Activated CD4-positive, alpha-beta T cell treated with anti-CD3 and anti-CD28 coated beads, Interleukin-2, amount 10 ng/mL, durations not matched to agents 24 days and 14 days (primary cell): ENCODE measurements at regions of chr10 and their contacts with region 1.

Region 1: DNA sequence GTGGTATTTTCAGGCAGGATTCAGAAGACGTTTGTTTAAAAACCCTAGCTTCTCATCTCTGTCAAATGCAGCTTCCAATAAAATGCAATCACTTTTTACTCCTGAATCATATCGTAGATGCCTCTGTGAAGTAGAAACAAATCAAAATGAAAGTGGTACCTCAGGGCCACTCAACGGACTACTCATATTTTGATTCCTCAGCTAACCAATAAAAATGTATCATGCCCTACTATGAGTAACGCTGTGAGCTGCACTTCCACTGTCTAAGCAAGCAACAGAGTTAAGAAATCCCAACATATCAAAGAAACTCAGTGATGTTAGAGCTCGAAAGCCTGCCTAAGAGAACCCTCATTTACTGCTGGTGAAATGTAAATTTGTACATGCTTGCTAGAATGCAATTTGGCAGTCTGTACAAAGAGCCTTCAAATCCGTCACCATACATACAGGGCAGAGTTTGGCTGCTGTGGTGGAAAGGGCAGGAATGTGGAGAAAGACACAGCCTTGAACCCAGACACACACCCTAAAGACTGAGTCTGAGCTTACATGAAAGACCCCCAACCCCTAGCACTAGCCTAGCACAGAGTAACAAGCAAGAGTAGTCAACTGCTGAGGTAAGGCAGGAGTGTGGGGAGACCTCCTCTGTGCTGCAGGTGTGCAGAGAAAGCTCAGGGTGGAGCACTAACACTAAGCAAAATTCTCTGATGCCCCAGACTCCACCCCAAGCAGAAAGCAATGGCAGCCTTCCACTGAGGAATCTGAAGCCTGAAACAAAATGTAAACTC is 151.5 kb downstream of the ANK3 start:
- DNase-seq: peak; percentile 68
- H3K4me3 Mint-ChIP-seq: peak overlapping the region; percentile 73
- H3K27ac Mint-ChIP-seq: peak overlapping the region; percentile 67
- H3K4me1 Mint-ChIP-seq: peaks cover 24% of the 10 kb centered on the region
- H3K27me3 Mint-ChIP-seq: no peaks in the 10 kb centered on the region

Region 2: DNA sequence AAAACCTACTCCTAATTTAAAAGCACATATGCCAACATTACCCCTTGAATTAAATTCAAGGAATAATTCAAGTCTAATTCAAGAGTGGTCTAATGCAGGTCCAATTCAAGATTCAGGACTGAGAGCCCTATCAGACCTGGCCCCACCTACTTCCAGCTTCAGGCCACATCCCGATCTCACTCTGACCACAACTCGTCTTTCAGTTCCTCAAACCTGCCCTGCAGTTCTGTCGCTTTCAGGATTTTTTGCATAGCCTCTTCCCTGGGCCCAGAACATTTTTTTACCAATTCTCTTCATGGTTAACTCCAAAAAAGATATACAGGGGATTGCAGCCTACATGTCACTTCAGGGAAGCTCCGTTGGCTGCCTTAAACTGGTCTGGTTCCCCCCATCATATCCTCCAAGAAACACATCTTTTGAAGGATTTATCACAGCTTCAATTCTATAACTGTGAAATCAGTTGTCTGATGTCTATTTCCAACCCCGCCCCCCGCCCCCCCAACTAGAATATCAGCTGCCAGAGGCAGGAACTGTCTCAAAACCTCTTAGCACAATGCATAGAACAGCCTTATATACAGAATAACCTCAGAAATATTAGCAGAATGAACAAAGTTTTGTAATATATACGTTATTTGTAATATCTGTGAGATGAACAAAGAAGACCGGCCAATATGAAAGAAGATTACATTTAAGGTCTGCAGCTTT is 352.6 kb before region 1 on chr10:
- intact Hi-C with region 1: no loop called
- DNase-seq: no peak
- H3K4me3 Mint-ChIP-seq: peak overlapping the region; percentile 69
- H3K27ac Mint-ChIP-seq: peak overlapping the region; percentile 90
- H3K4me1 Mint-ChIP-seq: peaks cover 77% of the 10 kb centered on the region
- H3K27me3 Mint-ChIP-seq: no peaks in the 10 kb centered on the region

Region 3: GRCh38 chr10:60208676-60209269 is 29.4 kb before region 1 on chr10:
- intact Hi-C with region 1: loop called (anchors 2 kb)
- DNase-seq: no peak
- H3K4me3 Mint-ChIP-seq: no peak overlapping the region
- H3K27ac Mint-ChIP-seq: peak overlapping the region; percentile 54
- H3K4me1 Mint-ChIP-seq: peaks cover 31% of the 10 kb centered on the region
- H3K27me3 Mint-ChIP-seq: no peaks in the 10 kb centered on the region

Region 4: DNA sequence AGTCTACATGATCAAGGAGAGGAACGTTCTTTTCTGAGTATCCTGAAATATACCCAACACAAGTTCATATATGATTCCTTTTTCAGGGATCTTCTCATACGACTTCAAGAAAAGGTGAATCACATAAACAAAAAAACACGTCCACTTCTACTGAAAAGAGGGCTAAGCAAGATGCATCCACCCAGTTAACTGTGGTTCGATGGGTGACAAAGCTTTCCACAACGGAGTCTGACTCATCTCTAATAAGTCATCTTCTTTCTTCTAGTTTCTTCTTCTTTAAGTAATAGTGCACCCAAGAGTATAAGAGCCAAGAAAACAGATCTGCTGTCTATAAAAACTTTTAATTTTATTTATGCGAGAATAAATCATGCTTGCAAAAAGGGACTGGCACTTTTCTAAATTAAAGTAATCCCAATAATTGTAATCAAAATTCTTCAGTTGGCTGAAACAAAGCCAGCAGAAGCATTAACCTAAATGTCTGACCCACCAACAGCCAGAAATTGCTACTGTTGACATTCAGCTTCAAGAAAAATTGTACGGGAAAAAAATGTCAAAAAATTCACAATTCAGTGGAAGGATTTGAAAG is 298.5 kb after region 1 on chr10:
- intact Hi-C with region 1: loop called (anchors 10 kb)
- DNase-seq: peak; percentile 64
- H3K4me3 Mint-ChIP-seq: peak overlapping the region; percentile 11
- H3K27ac Mint-ChIP-seq: peak overlapping the region; percentile 68
- H3K4me1 Mint-ChIP-seq: peaks cover 37% of the 10 kb centered on the region
- H3K27me3 Mint-ChIP-seq: no peaks in the 10 kb centered on the region

Region 5: DNA sequence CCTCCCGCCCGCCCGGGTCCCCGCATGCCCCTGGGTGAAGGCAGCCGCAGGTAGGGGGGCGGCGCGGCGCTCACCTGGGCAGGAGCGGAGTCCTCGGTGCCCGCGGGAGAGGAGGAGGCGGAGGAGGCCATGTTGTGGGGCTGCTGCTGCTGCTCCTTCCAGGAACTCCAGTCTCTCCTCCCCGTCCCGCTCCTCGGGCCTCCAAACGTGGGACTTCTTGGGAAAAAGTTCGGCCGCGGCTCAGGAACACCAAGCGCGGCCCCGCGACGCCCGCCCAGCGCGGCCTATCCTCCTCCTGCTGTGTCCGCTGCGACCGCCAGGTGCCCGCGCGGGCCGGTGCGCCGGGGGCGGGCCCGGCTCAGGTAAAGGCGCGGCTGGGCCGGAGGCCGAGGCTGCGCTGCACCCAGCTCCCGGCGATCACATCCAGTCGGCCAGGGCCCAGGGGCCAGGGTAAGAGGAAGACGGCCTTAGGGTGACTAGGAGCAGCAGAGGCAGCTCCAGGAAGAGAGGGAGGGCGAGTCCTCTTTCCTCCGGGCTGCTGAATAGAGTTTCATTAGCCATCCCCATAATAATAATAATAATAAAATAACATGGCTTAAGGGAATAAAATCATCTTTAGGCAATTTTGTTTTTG is 495.1 kb after region 1 on chr10:
- intact Hi-C with region 1: loop called (anchors 5 kb)
- DNase-seq: peak; percentile 88
- H3K4me3 Mint-ChIP-seq: peak overlapping the region; percentile 81
- H3K27ac Mint-ChIP-seq: peak overlapping the region; percentile 49
- H3K4me1 Mint-ChIP-seq: peaks cover 39% of the 10 kb centered on the region
- H3K27me3 Mint-ChIP-seq: peaks cover 2% of the 10 kb centered on the region

Region 6: GRCh38 chr10:60944159-60944909 is 706.2 kb after region 1 on chr10 and contains the start of gene RHOBTB1:
- intact Hi-C with region 1: loop called (anchors 10 kb)
- DNase-seq: peak; percentile 81
- H3K4me3 Mint-ChIP-seq: peak within 1 kb of the TSS; percentile 82
- H3K27ac Mint-ChIP-seq: peak within 1 kb of the TSS; percentile 74
- H3K4me1 Mint-ChIP-seq: peaks cover 8% of the 10 kb centered on the region
- H3K27me3 Mint-ChIP-seq: peaks cover 79% of the 10 kb centered on the region
- total RNA-seq, gene RHOBTB1: 0.69 TPM in 1 of 2 replicates, not detected in the other